CD8-positive, alpha-beta T cell (primary cell): ENCODE measurements at regions of chr14 and their contacts with region 1.

Region 1: DNA sequence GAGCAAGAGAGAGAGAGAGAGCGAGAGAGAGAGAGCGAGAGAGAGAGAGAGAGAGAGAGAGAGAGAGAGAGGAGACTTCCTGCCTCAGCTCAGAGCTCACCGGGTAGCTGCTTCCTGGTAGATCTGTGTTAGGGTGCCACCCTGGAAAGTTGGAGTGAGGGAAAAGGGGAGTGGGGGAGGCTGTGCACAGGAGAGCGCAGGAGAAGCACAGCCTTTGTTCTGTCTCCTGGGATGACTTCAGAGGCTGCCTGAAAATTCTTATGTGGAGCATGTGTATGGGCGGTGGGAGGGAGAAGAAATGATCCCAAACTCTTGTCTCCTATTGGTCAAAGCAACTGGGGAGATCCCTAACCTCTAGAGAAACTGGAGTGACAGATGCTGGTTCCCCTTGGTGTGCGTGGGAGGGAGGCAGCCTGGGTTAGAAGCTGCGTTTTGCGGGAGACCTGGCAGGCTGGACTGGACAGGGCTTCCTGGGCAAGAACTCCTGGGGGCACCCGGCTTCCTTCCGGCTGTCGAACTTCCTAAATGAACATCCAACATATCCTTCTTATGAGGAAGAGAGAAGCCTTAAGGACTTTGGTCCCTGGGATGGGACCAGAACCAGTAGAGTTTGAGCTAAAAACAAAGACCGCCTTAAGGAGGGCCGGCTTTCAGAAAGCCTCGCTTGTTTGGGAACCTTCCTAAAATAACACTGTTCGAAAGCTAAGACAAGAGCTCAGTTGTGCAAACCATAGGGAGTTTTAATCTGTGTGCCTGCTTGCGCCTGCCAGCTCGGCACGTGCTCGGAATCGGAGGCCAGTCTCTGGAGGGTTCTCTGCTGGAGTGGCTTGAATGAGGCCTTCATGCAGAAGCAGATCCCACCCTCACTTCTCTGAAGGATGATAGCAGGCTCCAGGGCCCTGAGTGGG is 30.4 kb upstream of the BEGAIN start:
- DNase-seq: peak in 2 of 9 experiments; percentile 48 to 67
- ATAC-seq: no peak
- H3K4me3 ChIP-seq: no peak overlapping the region
- H3K4me3 Mint-ChIP-seq: peak overlapping the region; percentile 27
- H3K27ac ChIP-seq: no peak overlapping the region
- H3K27ac Mint-ChIP-seq: peak overlapping the region; percentile 67
- H3K4me1 ChIP-seq: peaks cover 22% of the 10 kb centered on the region
- H3K4me1 Mint-ChIP-seq: peaks cover 20% of the 10 kb centered on the region
- H3K27me3 ChIP-seq: peaks cover 0 to 3% of the 10 kb centered on the region in 2 experiments
- H3K27me3 Mint-ChIP-seq: peaks cover 6% of the 10 kb centered on the region
- CTCF ChIP-seq: no peak

Region 2: GRCh38 chr14:101992708-101993107 is 1375.0 kb after region 1 on chr14:
- CTCF ChIA-PET with region 1: no interaction called
- POLR2A ChIA-PET with region 1: no interaction called
- intact Hi-C with region 1: loop called in 1 of 2 experiments (anchors 10 kb)
- DNase-seq: no peak
- ATAC-seq: no peak
- H3K4me3 ChIP-seq: no peak overlapping the region
- H3K4me3 Mint-ChIP-seq: no peak overlapping the region
- H3K27ac ChIP-seq: no peak overlapping the region
- H3K27ac Mint-ChIP-seq: no peak overlapping the region
- H3K4me1 ChIP-seq: no peaks in the 10 kb centered on the region
- H3K4me1 Mint-ChIP-seq: peaks cover 2% of the 10 kb centered on the region
- H3K27me3 ChIP-seq: no peaks in the 10 kb centered on the region
- H3K27me3 Mint-ChIP-seq: no peaks in the 10 kb centered on the region
- CTCF ChIP-seq: no peak